Esophagus muscularis mucosa (tissue), 4 donors: ENCODE measurements at regions of chr1 and their contacts with region 1.

Region 1: GRCh38 chr1:229558571-229559335 is at the start of gene ABCB10:
- DNase-seq: peak; percentile 97
- H3K4me3 ChIP-seq: peak within 1 kb of the TSS; percentile 91 to 94 (median 94)
- H3K27ac ChIP-seq: peak within 1 kb of the TSS; percentile 90 to 97 (median 96)
- H3K4me1 ChIP-seq: peaks cover 41 to 61% (median 56%) of the 10 kb centered on the region in 4 donors
- H3K27me3 ChIP-seq: no peaks in the 10 kb centered on the region
- CTCF ChIP-seq: peak; percentile 82 to 83 (median 82)
- EP300 ChIP-seq: no peak
- POLR2A ChIP-seq: peak; percentile 46
- total RNA-seq, gene ABCB10: 14.1 to 28.7 (median 21.3) TPM

Region 2: GRCh38 chr1:229318056-229318455 is 240.7 kb before region 1 on chr1:
- intact Hi-C with region 1: no loop called
- DNase-seq: peak; percentile 4
- H3K4me3 ChIP-seq: no peak overlapping the region
- H3K27ac ChIP-seq: no peak overlapping the region
- H3K4me1 ChIP-seq: no peaks in the 10 kb centered on the region
- H3K27me3 ChIP-seq: no peaks in the 10 kb centered on the region
- CTCF ChIP-seq: no peak
- EP300 ChIP-seq: no peak
- POLR2A ChIP-seq: no peak

Region 3: DNA sequence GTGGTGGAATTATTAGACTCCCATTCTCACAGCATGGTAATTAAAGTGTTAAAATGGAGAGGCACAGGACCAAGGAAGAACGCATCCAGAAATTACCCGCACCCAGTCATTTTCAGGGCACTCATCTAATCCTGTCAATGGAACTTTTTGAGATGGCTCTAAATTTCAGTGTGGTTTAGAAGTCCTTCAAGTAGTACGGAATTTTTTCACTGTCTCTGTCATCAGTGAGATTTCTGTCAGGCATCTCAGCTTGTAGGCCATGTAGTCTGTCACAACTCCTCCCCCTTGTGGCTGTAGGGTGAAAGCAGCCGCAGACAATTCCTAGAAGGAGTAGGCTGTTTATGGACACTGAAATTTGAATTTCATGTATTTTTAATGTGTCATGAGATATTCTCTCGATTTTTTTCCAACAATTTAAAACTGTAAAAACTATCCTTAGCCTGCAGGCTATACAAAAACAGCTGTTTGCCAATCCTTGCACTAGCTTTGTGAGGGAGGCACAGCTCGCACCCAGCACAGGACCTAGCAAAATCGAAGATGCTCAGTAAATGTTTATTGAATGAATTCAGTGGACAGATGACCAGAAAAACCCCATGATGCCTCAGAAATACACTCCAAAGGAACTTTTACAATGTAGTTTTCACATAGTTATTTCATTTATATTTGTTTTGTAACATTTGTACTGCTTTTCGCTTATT is 44.0 kb before region 1 on chr1:
- intact Hi-C with region 1: loop called (anchors 5 kb)
- DNase-seq: no peak
- H3K4me3 ChIP-seq: no peak overlapping the region
- H3K27ac ChIP-seq: peak overlapping the region in 2 of 4 donors; percentile 31 to 41
- H3K4me1 ChIP-seq: peaks cover 0 to 6% (median 5%) of the 10 kb centered on the region in 4 donors
- H3K27me3 ChIP-seq: no peaks in the 10 kb centered on the region
- CTCF ChIP-seq: peak; percentile 66 to 82 (median 82)
- EP300 ChIP-seq: no peak
- POLR2A ChIP-seq: no peak

Region 4: GRCh38 chr1:229625915-229626831 is 67.4 kb after region 1 on chr1 and contains the starts of genes TAF5L and URB2:
- intact Hi-C with region 1: loop called (anchors 1 kb)
- DNase-seq: peak; percentile 93
- H3K4me3 ChIP-seq: peak within 1 kb of the TSS; percentile 77 to 97 (median 87)
- H3K27ac ChIP-seq: peak within 1 kb of the TSS; percentile 90 to 95 (median 94)
- H3K4me1 ChIP-seq: peaks cover 32 to 55% (median 49%) of the 10 kb centered on the region in 4 donors
- H3K27me3 ChIP-seq: no peaks in the 10 kb centered on the region
- CTCF ChIP-seq: peak in 1 of 3 experiments; percentile 17
- EP300 ChIP-seq: no peak
- POLR2A ChIP-seq: peak; percentile 40
- total RNA-seq, gene TAF5L: 18.7 to 29.6 (median 23.4) TPM
- total RNA-seq, gene URB2: 5.0 to 14.6 (median 8.3) TPM

Region 5: DNA sequence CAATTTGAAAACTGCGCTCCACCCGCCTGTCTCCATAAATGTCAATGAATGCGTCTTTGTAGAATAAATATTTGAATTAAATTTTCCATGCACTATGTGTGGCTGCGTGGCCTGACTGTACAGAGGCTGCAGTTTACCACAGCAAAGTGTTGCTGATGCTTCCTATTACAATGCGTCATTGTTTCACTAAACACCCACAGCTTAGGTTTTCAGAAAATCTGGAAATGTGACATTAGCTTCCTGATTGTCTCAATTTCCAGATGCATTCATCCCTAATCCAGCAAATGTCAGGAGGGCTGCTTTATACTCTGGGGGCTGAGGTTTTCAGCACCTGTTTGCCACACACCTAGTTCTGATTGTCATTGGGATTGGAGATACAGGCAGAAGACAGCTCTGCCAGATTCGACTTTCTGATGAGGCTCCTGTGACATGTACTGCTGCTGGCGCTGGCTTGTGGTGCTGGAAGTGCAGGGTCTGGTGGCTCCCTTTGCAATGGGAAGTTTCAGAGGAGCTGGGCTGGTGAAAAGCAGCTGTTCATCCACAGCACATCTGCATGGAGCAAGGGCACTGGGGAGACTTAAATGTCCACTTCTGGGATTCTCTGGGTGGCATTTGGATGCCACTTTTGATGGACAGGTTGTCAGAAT is 107.3 kb after region 1 on chr1:
- intact Hi-C with region 1: no loop called
- DNase-seq: no peak
- H3K4me3 ChIP-seq: no peak overlapping the region
- H3K27ac ChIP-seq: no peak overlapping the region
- H3K4me1 ChIP-seq: peaks cover 4 to 31% (median 21%) of the 10 kb centered on the region in 4 donors
- H3K27me3 ChIP-seq: no peaks in the 10 kb centered on the region
- CTCF ChIP-seq: no peak
- EP300 ChIP-seq: no peak
- POLR2A ChIP-seq: no peak